ENCODE measurements at regions of chr3 and their contacts with region 1.

Region 1: DNA sequence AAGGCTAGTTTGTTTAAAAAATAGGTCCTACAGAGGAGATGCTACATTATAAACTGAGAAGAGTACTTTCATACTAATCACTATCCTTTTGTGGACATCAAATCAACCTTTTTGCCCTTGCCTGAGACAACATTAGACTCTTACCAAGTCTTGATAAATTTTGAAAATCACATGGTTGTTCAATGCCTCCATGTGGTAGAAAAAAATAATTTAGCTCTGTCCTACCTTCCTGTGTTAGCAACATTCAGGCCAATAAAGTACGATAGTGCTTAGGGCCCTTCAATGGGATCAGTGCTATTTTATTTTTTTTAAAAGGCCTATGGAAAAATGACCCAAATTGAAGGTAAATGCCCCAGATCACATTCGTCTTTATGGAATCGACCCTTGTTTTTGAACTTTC is 5.0 kb upstream of the UBE2E1 start:
- DNase-seq: no peak
- ATAC-seq: no peak
- H3K4me3 Mint-ChIP-seq: no peak overlapping the region
- H3K27ac Mint-ChIP-seq: no peak overlapping the region
- H3K4me1 Mint-ChIP-seq: peaks cover 5% of the 10 kb centered on the region
- H3K27me3 Mint-ChIP-seq: no peaks in the 10 kb centered on the region
- CTCF ChIP-seq: no peak

Region 2: GRCh38 chr3:22565393-22565792 is 1235.3 kb before region 1 on chr3:
- CTCF ChIA-PET with region 1: no interaction called
- POLR2A ChIA-PET with region 1: no interaction called
- intact Hi-C with region 1: loop called (anchors 2 kb)
- DNase-seq: no peak
- ATAC-seq: no peak
- H3K4me3 Mint-ChIP-seq: no peak overlapping the region
- H3K27ac Mint-ChIP-seq: no peak overlapping the region
- H3K4me1 Mint-ChIP-seq: no peaks in the 10 kb centered on the region
- H3K27me3 Mint-ChIP-seq: no peaks in the 10 kb centered on the region
- CTCF ChIP-seq: no peak

Region 3: DNA sequence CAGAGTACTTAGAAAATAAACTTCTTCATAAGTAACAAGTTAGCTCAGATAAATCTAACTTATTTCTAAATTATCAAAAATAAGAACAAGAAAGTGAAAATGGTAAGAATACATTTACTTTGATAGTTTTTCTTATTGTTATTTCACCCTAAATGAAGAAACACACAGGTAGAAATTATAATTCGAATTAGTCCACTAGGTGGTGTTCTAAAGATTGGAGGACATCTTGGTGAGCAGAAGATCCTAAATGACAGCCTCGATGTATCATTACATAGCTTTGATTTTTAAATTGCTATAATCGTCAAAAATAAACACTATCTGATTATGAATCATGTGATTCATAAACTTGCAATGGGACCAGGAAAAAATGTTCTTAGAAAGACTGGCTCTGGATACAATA is 878.4 kb before region 1 on chr3:
- CTCF ChIA-PET with region 1: no interaction called
- POLR2A ChIA-PET with region 1: no interaction called
- intact Hi-C with region 1: loop called (anchors 1 kb)
- DNase-seq: no peak
- ATAC-seq: no peak
- H3K4me3 Mint-ChIP-seq: no peak overlapping the region
- H3K27ac Mint-ChIP-seq: no peak overlapping the region
- H3K4me1 Mint-ChIP-seq: no peaks in the 10 kb centered on the region
- H3K27me3 Mint-ChIP-seq: no peaks in the 10 kb centered on the region
- CTCF ChIP-seq: no peak

Region 4: GRCh38 chr3:22960105-22960984 is 840.4 kb before region 1 on chr3:
- CTCF ChIA-PET with region 1: no interaction called
- POLR2A ChIA-PET with region 1: no interaction called
- intact Hi-C with region 1: loop called (anchors 2 kb)
- DNase-seq: no peak
- ATAC-seq: no peak
- H3K4me3 Mint-ChIP-seq: no peak overlapping the region
- H3K27ac Mint-ChIP-seq: no peak overlapping the region
- H3K4me1 Mint-ChIP-seq: peaks cover 4% of the 10 kb centered on the region
- H3K27me3 Mint-ChIP-seq: no peaks in the 10 kb centered on the region
- CTCF ChIP-seq: no peak